ENCODE measurements at regions of chr3 and their contacts with region 1.

Region 1: DNA sequence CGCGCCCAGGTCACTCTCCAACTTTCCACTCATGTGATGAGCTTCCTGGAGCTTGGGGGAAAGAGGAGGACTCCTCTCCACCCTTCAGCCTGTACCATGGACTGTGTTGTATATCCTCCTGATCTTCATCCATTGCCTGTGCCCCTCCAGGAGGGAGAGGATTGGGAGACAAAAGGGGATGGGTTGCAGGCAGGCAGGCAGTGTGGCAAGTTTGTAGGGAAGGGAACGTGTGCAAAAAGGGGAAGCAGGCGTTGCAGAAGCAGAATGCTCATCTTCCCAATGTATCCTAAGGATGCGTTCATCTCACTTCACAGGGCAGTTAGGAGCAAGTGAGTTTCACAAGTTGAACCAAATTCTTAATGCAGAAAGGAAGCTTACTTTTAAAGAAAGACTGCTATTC is 28.1 kb upstream of the GHSR start:
- DNase-seq: no peak
- H3K4me3 ChIP-seq: no peak overlapping the region
- H3K4me3 Mint-ChIP-seq: peak overlapping the region; percentile 86
- H3K27ac Mint-ChIP-seq: no peak overlapping the region
- H3K4me1 ChIP-seq: no peaks in the 10 kb centered on the region
- H3K4me1 Mint-ChIP-seq: no peaks in the 10 kb centered on the region
- H3K27me3 ChIP-seq: no peaks in the 10 kb centered on the region
- H3K27me3 Mint-ChIP-seq: peaks cover 3% of the 10 kb centered on the region
- CTCF ChIP-seq: no peak

Region 2: DNA sequence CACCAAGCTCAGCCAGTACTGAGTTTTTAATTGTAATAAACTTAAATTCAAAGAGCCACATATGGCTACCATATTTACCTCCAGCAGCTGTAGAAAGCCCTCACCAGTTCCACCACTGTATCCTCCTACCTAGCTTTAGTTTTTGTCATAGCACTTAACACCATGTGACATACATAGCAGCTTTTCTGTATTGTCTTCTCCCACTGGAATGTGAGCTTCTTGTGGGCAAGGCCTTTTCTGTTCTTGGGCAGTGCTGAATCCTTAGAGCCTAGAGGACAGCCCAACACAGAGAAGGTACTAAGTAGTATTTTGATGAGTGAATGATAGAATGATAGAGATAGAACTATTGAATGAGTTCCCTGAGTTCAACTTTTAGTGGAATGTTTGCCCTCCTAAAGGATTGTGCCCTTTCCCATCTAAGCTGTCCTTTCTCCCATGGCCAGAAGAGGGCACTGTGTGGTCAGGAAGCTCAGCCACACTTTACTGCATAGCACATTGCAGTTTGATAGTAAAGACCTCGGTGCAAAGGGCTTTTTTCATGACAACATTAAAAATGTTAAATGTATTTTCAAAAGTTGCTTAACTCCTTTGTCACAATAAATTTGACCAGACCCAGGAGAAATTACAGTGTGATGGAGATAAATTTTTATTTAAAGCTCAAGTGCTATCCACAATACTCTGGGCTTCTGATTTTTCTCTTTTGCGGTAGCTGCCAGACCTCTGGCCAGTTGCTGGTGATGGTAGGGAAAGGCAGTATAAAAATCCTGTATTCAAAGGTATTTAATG is 143.9 kb before region 1 on chr3:
- CTCF ChIA-PET with region 1: interaction called, 9 read pairs
- POLR2A ChIA-PET with region 1: no interaction called
- intact Hi-C with region 1: loop called (anchors 1 kb)
- DNase-seq: peak; percentile 53 to 68
- H3K4me3 ChIP-seq: no peak overlapping the region
- H3K4me3 Mint-ChIP-seq: no peak overlapping the region
- H3K27ac Mint-ChIP-seq: no peak overlapping the region
- H3K4me1 ChIP-seq: no peaks in the 10 kb centered on the region
- H3K4me1 Mint-ChIP-seq: no peaks in the 10 kb centered on the region
- H3K27me3 ChIP-seq: no peaks in the 10 kb centered on the region
- H3K27me3 Mint-ChIP-seq: no peaks in the 10 kb centered on the region
- CTCF ChIP-seq: peak; percentile 82 to 88

Region 3: GRCh38 chr3:172359219-172359618 is 117.1 kb before region 1 on chr3:
- CTCF ChIA-PET with region 1: interaction called, 3 read pairs
- POLR2A ChIA-PET with region 1: no interaction called
- intact Hi-C with region 1: loop called (anchors 1 kb)
- DNase-seq: no peak
- H3K4me3 ChIP-seq: no peak overlapping the region
- H3K4me3 Mint-ChIP-seq: no peak overlapping the region
- H3K27ac Mint-ChIP-seq: no peak overlapping the region
- H3K4me1 ChIP-seq: no peaks in the 10 kb centered on the region
- H3K4me1 Mint-ChIP-seq: no peaks in the 10 kb centered on the region
- H3K27me3 ChIP-seq: no peaks in the 10 kb centered on the region
- H3K27me3 Mint-ChIP-seq: no peaks in the 10 kb centered on the region
- CTCF ChIP-seq: peak in 1 of 2 experiments; percentile 3

Region 4: GRCh38 chr3:172461530-172462138 is 14.7 kb before region 1 on chr3:
- CTCF ChIA-PET with region 1: interaction called, 11 read pairs
- POLR2A ChIA-PET with region 1: no interaction called
- intact Hi-C with region 1: loop called (anchors 1 kb)
- DNase-seq: peak in 1 of 2 experiments; percentile 24
- H3K4me3 ChIP-seq: no peak overlapping the region
- H3K4me3 Mint-ChIP-seq: no peak overlapping the region
- H3K27ac Mint-ChIP-seq: no peak overlapping the region
- H3K4me1 ChIP-seq: peaks cover 9% of the 10 kb centered on the region; the same call in 1 of the 2 replicates
- H3K4me1 Mint-ChIP-seq: peaks cover 7% of the 10 kb centered on the region
- H3K27me3 ChIP-seq: no peaks in the 10 kb centered on the region
- H3K27me3 Mint-ChIP-seq: no peaks in the 10 kb centered on the region
- CTCF ChIP-seq: peak; percentile 52 to 85

Region 5: GRCh38 chr3:172580680-172581401 is 104.5 kb after region 1 on chr3:
- CTCF ChIA-PET with region 1: no interaction called
- POLR2A ChIA-PET with region 1: no interaction called
- intact Hi-C with region 1: no loop called
- DNase-seq: no peak
- H3K4me3 ChIP-seq: no peak overlapping the region
- H3K4me3 Mint-ChIP-seq: no peak overlapping the region
- H3K27ac Mint-ChIP-seq: no peak overlapping the region
- H3K4me1 ChIP-seq: no peaks in the 10 kb centered on the region
- H3K4me1 Mint-ChIP-seq: peaks cover 8% of the 10 kb centered on the region
- H3K27me3 ChIP-seq: no peaks in the 10 kb centered on the region
- H3K27me3 Mint-ChIP-seq: no peaks in the 10 kb centered on the region
- CTCF ChIP-seq: no peak

Measured in Caco-2 (cell line).